ENCODE measurements at regions of chr6 and their contacts with region 1.

Region 1: GRCh38 chr6:125764121-125764671 is 14.8 kb downstream of the HEY2 start:
- DNase-seq: no peak
- H3K4me3 ChIP-seq: no peak overlapping the region
- H3K27ac ChIP-seq: no peak overlapping the region
- H3K4me1 ChIP-seq: no peaks in the 10 kb centered on the region
- H3K27me3 ChIP-seq: peaks cover 0 to 37% (median 2%) of the 10 kb centered on the region in 7 donors
- CTCF ChIP-seq: no peak
- POLR2A ChIP-seq: no peak

Region 2: DNA sequence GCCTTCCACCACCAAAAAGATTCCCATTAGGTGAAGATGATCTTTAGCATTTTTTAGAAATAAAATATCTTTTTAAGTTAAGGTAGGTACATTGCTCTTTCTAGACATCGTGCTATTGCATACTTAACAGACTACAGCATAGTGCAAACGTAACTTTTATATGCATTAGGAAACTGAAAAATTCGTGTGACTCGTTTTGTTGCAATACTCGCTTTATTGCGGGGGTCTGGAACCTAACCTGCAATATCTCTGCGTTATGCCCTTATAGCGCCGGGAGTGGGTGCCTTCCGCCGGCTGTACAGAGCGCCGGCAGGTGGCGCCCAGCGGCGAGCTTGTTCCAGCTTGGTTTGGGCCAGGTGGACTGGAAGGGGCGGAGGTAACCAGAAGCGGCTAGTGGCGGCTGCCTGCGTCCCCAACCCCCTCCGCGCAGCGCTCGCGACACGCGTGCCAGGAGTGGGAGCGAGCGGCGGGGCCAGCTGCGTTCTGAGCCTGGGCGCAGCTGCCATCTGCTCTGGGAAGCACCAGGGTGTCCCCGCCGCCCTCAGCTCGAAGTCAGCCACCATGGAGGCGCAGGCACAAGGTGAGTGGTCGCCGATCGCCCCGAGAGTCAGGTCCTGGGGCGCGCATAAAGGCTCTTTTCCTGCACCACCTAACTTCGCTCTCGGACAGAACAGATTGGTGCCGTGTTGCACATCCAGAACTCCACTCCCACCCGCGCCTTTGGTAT is 610.6 kb before region 1 on chr6 and contains the start of gene TPD52L1:
- intact Hi-C with region 1: loop called (anchors 10 kb)
- DNase-seq: peak; percentile 91
- H3K4me3 ChIP-seq: peak within 1 kb of the TSS; percentile 3 to 71 (median 52)
- H3K27ac ChIP-seq: peak within 1 kb of the TSS in 1 of 8 donors; percentile 36
- H3K4me1 ChIP-seq: peaks cover 0 to 20% (median 18%) of the 10 kb centered on the region in 6 donors
- H3K27me3 ChIP-seq: peaks cover 0 to 51% (median 15%) of the 10 kb centered on the region in 7 donors
- CTCF ChIP-seq: peak in 10 of 11 experiments; percentile 19 to 83 (median 64)
- POLR2A ChIP-seq: no peak
- total RNA-seq, gene TPD52L1: 2.5 to 9.1 (median 4.7) TPM

Region 3: GRCh38 chr6:125316621-125317020 is 447.6 kb before region 1 on chr6:
- intact Hi-C with region 1: loop called (anchors 5 kb)
- DNase-seq: no peak
- H3K4me3 ChIP-seq: no peak overlapping the region
- H3K27ac ChIP-seq: no peak overlapping the region
- H3K4me1 ChIP-seq: peaks cover 0 to 6% (median 0%) of the 10 kb centered on the region in 6 donors
- H3K27me3 ChIP-seq: peaks cover 0 to 6% (median 0%) of the 10 kb centered on the region in 7 donors
- CTCF ChIP-seq: no peak
- POLR2A ChIP-seq: no peak

Measured in spleen (tissue), 13 donors.